ENCODE measurements at regions of chr3 and their contacts with region 1.

Region 1: DNA sequence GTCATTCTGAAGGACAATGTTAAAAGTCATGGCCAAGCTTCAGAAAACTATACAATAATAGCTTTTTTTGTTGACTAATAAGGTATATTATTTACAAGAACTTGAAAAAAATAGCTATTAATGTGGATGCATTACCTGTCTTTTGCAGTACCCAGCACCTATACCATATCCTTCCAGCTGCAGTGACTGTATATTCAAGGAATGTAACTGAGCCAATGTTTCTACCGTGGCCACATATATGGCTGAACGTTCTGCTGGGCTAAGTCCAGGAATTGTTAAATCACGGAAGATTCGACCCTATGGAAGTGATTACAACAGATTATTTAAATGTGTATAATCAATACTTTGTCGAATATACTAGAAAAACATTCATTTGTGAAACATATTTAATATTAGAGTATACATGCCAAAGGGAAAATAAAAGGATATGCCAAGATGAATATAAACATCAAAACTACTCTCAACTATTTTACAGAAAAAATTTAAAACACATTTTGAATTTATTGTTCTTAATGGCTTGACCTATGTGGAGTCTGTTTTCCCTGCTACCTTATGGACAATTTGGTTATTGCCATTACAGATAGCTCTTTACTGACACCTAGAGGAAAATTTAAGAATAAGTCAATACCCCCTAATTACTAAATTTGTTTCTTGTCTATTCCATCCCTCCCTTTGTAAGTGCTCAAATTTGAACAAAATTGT is 17.6 kb downstream of the ACAD11 start:
- DNase-seq: no peak
- ATAC-seq: peak; percentile 77
- H3K4me3 Mint-ChIP-seq: no peak overlapping the region
- H3K27ac Mint-ChIP-seq: no peak overlapping the region
- H3K4me1 Mint-ChIP-seq: peaks cover 9% of the 10 kb centered on the region
- H3K27me3 Mint-ChIP-seq: no peaks in the 10 kb centered on the region
- CTCF ChIP-seq: peak; percentile 75

Region 2: GRCh38 chr3:132352541-132353143 is 289.3 kb before region 1 on chr3:
- CTCF ChIA-PET with region 1: interaction called, 5 read pairs
- POLR2A ChIA-PET with region 1: no interaction called
- intact Hi-C with region 1: loop called (anchors 10 kb)
- DNase-seq: peak; percentile 83
- ATAC-seq: peak; percentile 96
- H3K4me3 Mint-ChIP-seq: no peak overlapping the region
- H3K27ac Mint-ChIP-seq: no peak overlapping the region
- H3K4me1 Mint-ChIP-seq: peaks cover 2% of the 10 kb centered on the region
- H3K27me3 Mint-ChIP-seq: peaks cover 1% of the 10 kb centered on the region
- CTCF ChIP-seq: peak; percentile 94

Region 3: GRCh38 chr3:132522353-132522752 is 119.6 kb before region 1 on chr3:
- CTCF ChIA-PET with region 1: interaction called, 15 read pairs
- POLR2A ChIA-PET with region 1: no interaction called
- intact Hi-C with region 1: no loop called
- DNase-seq: no peak
- ATAC-seq: peak; percentile 67
- H3K4me3 Mint-ChIP-seq: no peak overlapping the region
- H3K27ac Mint-ChIP-seq: no peak overlapping the region
- H3K4me1 Mint-ChIP-seq: peaks cover 20% of the 10 kb centered on the region
- H3K27me3 Mint-ChIP-seq: no peaks in the 10 kb centered on the region
- CTCF ChIP-seq: no peak

Region 4: GRCh38 chr3:132535575-132536441 is 106.2 kb before region 1 on chr3:
- CTCF ChIA-PET with region 1: interaction called, 130 read pairs
- POLR2A ChIA-PET with region 1: no interaction called
- intact Hi-C with region 1: loop called (anchors 1 kb)
- DNase-seq: peak; percentile 80
- ATAC-seq: peak; percentile 64
- H3K4me3 Mint-ChIP-seq: no peak overlapping the region
- H3K27ac Mint-ChIP-seq: peak overlapping the region; percentile 81
- H3K4me1 Mint-ChIP-seq: peaks cover 13% of the 10 kb centered on the region
- H3K27me3 Mint-ChIP-seq: no peaks in the 10 kb centered on the region
- CTCF ChIP-seq: peak; percentile 71

Region 5: GRCh38 chr3:132543036-132543739 is 98.8 kb before region 1 on chr3:
- CTCF ChIA-PET with region 1: interaction called, 130 read pairs
- POLR2A ChIA-PET with region 1: no interaction called
- intact Hi-C with region 1: no loop called
- DNase-seq: no peak
- ATAC-seq: peak; percentile 74
- H3K4me3 Mint-ChIP-seq: peak overlapping the region; percentile 13
- H3K27ac Mint-ChIP-seq: peak overlapping the region; percentile 90
- H3K4me1 Mint-ChIP-seq: peaks cover 51% of the 10 kb centered on the region
- H3K27me3 Mint-ChIP-seq: no peaks in the 10 kb centered on the region
- CTCF ChIP-seq: no peak

Region 6: GRCh38 chr3:132549890-132550578 is 92.0 kb before region 1 on chr3:
- CTCF ChIA-PET with region 1: interaction called, 19 read pairs
- POLR2A ChIA-PET with region 1: no interaction called
- intact Hi-C with region 1: no loop called
- DNase-seq: peak; percentile 24
- ATAC-seq: peak; percentile 93
- H3K4me3 Mint-ChIP-seq: peak overlapping the region; percentile 26
- H3K27ac Mint-ChIP-seq: peak overlapping the region; percentile 97
- H3K4me1 Mint-ChIP-seq: peaks cover 53% of the 10 kb centered on the region
- H3K27me3 Mint-ChIP-seq: no peaks in the 10 kb centered on the region
- CTCF ChIP-seq: no peak

Region 7: DNA sequence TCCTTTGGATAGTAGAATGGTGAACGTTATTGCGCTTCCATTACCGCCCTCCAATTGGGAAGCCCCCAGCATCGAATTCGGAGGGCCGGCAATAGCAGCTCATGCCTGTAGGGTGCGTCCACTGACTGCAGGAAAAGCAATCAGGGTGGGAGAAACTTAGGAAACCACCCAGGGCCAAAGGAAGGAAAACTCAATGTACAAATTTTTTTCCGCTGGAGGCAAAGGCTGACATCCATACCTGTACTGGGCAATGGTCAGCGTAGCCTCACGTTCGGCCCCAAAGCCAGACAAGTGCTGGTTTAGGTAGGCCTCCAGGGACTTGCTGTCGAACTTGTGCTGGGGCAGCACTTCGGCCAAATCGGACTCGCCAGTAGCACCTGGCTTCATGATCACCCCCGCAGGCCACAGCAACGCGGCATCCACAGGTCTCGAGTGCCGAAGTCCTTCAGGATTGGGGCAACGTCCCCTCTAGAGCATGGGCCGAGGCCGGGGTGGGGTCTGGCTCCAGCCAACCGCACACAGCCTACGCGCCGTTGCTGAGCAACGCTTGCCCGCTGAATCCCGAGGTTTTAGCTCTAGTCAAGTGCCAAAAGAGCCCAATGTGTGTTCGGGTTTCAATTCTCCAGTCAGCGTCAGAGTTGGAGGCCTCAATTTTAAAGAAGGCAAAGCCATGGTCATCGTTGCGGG is 17.5 kb after region 1 on chr3 and contains the start of gene ACAD11:
- CTCF ChIA-PET with region 1: interaction called, 15 read pairs
- POLR2A ChIA-PET with region 1: interaction called, 3 read pairs
- intact Hi-C with region 1: no loop called
- DNase-seq: peak; percentile 70
- ATAC-seq: peak; percentile 59
- H3K4me3 Mint-ChIP-seq: peak within 1 kb of the TSS; percentile 92
- H3K27ac Mint-ChIP-seq: peak within 1 kb of the TSS; percentile 93
- H3K4me1 Mint-ChIP-seq: peaks cover 49% of the 10 kb centered on the region
- H3K27me3 Mint-ChIP-seq: no peaks in the 10 kb centered on the region
- CTCF ChIP-seq: peak; percentile 64
- total RNA-seq, gene ACAD11: 20.6 to 22.3 TPM

Region 8: DNA sequence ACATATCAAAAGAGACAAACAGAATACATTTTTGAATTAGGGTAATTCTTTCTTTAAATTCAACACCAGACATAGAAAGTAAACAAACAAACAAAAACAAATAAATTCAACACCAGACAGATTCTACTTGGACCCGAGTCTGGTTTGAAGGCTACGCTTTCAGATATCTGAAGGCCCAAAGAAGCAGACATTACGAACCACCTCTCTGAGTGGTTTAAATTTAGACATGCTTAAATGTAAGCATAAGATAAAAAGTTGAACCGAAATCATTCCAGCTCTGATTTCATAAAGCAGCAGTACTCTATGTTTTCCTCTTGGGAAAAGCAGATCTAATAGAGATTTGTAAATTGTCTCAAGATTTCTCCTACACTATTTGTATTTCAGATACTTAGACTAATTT is 48.1 kb after region 1 on chr3:
- CTCF ChIA-PET with region 1: no interaction called
- POLR2A ChIA-PET with region 1: no interaction called
- intact Hi-C with region 1: no loop called
- DNase-seq: no peak
- ATAC-seq: no peak
- H3K4me3 Mint-ChIP-seq: no peak overlapping the region
- H3K27ac Mint-ChIP-seq: no peak overlapping the region
- H3K4me1 Mint-ChIP-seq: peaks cover 2% of the 10 kb centered on the region
- H3K27me3 Mint-ChIP-seq: no peaks in the 10 kb centered on the region
- CTCF ChIP-seq: no peak

Region 9: DNA sequence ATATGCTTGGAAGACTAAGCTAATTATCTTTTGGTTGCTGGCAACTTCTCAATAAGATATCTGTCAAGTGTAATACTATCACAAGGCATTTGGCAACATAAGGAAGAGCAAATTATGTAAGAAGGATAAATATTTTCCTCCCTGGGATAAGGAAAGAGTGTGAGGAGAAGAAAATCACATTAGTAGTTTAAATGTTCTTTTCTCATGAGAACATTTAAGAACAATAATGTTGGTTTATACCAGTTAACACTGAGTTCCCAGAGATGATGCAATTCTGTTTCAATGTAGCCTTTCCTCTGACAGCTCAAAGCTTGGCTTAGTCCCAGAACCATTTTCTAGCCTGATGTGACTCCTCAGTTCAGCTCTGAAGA is 146.3 kb after region 1 on chr3:
- CTCF ChIA-PET with region 1: no interaction called
- POLR2A ChIA-PET with region 1: no interaction called
- intact Hi-C with region 1: no loop called
- DNase-seq: no peak
- ATAC-seq: no peak
- H3K4me3 Mint-ChIP-seq: no peak overlapping the region
- H3K27ac Mint-ChIP-seq: no peak overlapping the region
- H3K4me1 Mint-ChIP-seq: no peaks in the 10 kb centered on the region
- H3K27me3 Mint-ChIP-seq: peaks cover 11% of the 10 kb centered on the region
- CTCF ChIP-seq: no peak

Measured in activated CD8-positive, alpha-beta T cell treated with anti-CD3 and anti-CD28 coated beads for 36 hours (primary cell).